PC-9 (cell line): ENCODE measurements at regions of chr11 and their contacts with region 1.

Region 1: GRCh38 chr11:117319214-117319840 is 3.3 kb upstream of the BACE1 start:
- DNase-seq: no peak
- H3K4me3 ChIP-seq: no peak overlapping the region
- H3K27ac ChIP-seq: no peak overlapping the region
- H3K4me1 ChIP-seq: 0 out of 2 replicates have a peak, but pooled peaks cover 6% of the 10 kb centered on the region
- H3K27me3 ChIP-seq: no peaks in the 10 kb centered on the region
- CTCF ChIP-seq: no peak

Region 2: GRCh38 chr11:117238221-117238620 is 81.1 kb before region 1 on chr11:
- CTCF ChIA-PET with region 1: interaction called, 10 read pairs
- POLR2A ChIA-PET with region 1: no interaction called
- intact Hi-C with region 1: no loop called
- DNase-seq: no peak
- H3K4me3 ChIP-seq: no peak overlapping the region
- H3K27ac ChIP-seq: no peak overlapping the region
- H3K4me1 ChIP-seq: peaks cover 10% of the 10 kb centered on the region
- H3K27me3 ChIP-seq: no peaks in the 10 kb centered on the region
- CTCF ChIP-seq: no peak